ENCODE measurements at regions of chr3 and their contacts with region 1.

Region 1: GRCh38 chr3:44833394-44833793 is 28.3 kb upstream of the TMEM42 start:
- DNase-seq: no peak
- H3K4me3 ChIP-seq: no peak overlapping the region
- H3K27ac ChIP-seq: no peak overlapping the region
- H3K4me1 ChIP-seq: no peaks in the 10 kb centered on the region
- H3K27me3 ChIP-seq: no peaks in the 10 kb centered on the region
- CTCF ChIP-seq: no peak

Region 2: GRCh38 chr3:44761424-44762169 is 71.8 kb before region 1 on chr3 and contains the starts of genes KIAA1143 and KIF15:
- CTCF ChIA-PET with region 1: no interaction called
- dilution Hi-C with region 1: loop called (anchors 5 kb)
- in situ Hi-C with region 1: no loop called
- intact Hi-C with region 1: no loop called
- DNase-seq: peak; percentile 92
- H3K4me3 ChIP-seq: peak within 1 kb of the TSS; percentile 72 to 97 (median 88)
- H3K27ac ChIP-seq: peak within 1 kb of the TSS; percentile 96
- H3K4me1 ChIP-seq: peaks cover 7% of the 10 kb centered on the region
- H3K27me3 ChIP-seq: no peaks in the 10 kb centered on the region
- CTCF ChIP-seq: peak in 1 of 2 donors; percentile 8
- total RNA-seq, gene KIAA1143: 21.3 to 25.3 TPM
- total RNA-seq, gene KIF15: 0.67 to 7.7 TPM

Region 3: DNA sequence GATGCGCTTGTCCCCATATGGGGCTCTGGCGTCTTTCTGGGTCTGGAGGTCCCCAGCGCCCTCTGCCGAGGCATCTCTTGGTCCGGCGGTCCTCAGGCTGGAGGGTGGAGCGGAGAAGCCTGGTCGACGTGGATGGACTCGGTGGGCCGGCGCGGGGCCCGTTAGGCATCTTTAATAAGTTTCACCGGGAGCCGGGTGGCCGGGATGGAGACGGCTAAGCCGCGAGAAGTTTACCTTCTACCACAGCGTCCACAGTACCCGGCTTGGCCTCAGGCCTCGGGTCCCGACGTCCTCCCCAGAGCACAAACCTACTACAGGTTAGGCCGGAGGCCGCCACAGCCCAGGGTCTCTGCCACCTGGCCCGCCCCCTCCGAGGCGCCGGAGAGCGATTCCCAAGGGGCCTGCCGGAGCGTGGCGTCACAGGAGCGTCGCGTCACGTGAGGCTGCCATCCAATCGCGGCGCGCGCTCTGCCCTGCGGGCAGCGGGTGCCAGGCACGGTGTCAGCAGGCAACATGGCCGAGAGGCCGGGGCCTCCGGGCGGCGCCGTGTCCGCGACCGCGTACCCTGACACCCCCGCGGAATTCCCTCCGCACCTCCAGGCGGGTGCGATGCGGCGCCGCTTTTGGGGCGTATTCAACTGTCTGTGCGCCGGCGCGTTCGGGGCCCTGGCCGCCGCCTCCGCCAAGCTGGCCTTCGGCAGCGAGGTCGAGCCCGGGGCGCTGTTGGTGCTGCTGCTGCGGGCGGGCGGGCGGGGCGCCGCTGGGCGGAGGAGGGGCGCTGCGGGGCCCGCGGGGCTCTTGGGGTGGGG is 28.2 kb after region 1 on chr3 and contains the start of gene TMEM42:
- CTCF ChIA-PET with region 1: no interaction called
- dilution Hi-C with region 1: no loop called
- in situ Hi-C with region 1: no loop called
- intact Hi-C with region 1: loop called (anchors 1 kb)
- DNase-seq: peak; percentile 73
- H3K4me3 ChIP-seq: peak within 1 kb of the TSS; percentile 15 to 57 (median 43)
- H3K27ac ChIP-seq: no peak within 1 kb of the TSS
- H3K4me1 ChIP-seq: peaks cover 4% of the 10 kb centered on the region
- H3K27me3 ChIP-seq: no peaks in the 10 kb centered on the region
- CTCF ChIP-seq: no peak
- total RNA-seq, gene TMEM42: 11.8 to 12.9 TPM

Region 4: DNA sequence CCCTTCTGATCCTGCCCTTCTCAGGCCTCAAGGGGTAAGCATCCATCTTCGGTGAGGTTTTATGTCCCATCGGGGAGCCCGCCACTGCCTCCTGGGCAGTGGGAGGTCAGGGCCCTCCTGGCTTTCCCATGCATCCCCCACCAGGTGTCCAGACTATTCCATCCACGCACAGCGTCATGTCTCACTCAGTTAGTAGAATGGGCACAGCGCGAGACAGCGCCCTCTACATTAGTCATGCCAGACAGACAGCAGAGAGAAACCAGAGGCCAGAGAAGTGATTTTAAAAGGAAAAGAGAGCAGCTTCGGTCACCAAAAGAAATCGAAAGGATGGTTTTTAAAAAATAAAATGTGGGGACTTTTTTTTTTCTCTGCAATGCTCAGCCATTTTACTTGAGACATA is 92.8 kb after region 1 on chr3:
- CTCF ChIA-PET with region 1: no interaction called
- dilution Hi-C with region 1: loop called (anchors 5 kb)
- in situ Hi-C with region 1: no loop called
- intact Hi-C with region 1: no loop called
- DNase-seq: no peak
- H3K4me3 ChIP-seq: no peak overlapping the region
- H3K27ac ChIP-seq: no peak overlapping the region
- H3K4me1 ChIP-seq: peaks cover 3% of the 10 kb centered on the region
- H3K27me3 ChIP-seq: no peaks in the 10 kb centered on the region
- CTCF ChIP-seq: no peak